H1 (cell line): ENCODE measurements at regions of chr2 and their contacts with region 1.

Region 1: DNA sequence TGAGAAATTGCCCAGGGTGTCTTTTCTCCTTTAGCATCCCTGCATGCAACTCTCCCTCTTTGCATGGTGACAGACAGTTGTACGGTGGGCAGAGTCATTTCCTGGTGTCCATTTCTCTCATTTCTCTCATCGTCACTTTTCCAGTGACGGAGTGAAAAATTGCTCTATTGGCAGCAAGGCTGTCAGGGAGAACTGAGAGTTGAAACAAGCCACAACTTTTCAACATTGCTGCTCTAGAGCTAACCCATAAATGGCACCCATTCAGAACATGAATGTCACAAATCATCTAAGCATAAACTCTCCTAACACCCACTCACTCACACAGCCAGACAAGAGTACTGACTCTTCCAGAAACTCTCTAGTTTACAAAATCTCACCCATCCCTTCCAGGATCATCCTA is 55.7 kb downstream of the ZC3H8 start:
- DNase-seq: no peak
- H3K4me3 ChIP-seq: no peak overlapping the region
- H3K27ac ChIP-seq: no peak overlapping the region
- H3K4me1 ChIP-seq: no peaks in the 10 kb centered on the region; a peak in 1 of 7 replicates
- H3K27me3 ChIP-seq: no peaks in the 10 kb centered on the region
- CTCF ChIP-seq: no peak
- EP300 ChIP-seq: no peak
- POLR2A ChIP-seq: no peak
- RAD21 ChIP-seq: no peak

Region 2: GRCh38 chr2:112189001-112189556 is 10.1 kb before region 1 on chr2:
- CTCF ChIA-PET with region 1: interaction called, 10 read pairs
- POLR2A ChIA-PET with region 1: no interaction called
- DNase-seq: no peak
- H3K4me3 ChIP-seq: no peak overlapping the region
- H3K27ac ChIP-seq: no peak overlapping the region
- H3K4me1 ChIP-seq: no peaks in the 10 kb centered on the region
- H3K27me3 ChIP-seq: no peaks in the 10 kb centered on the region
- CTCF ChIP-seq: no peak
- EP300 ChIP-seq: no peak
- POLR2A ChIP-seq: no peak
- RAD21 ChIP-seq: no peak